Tibial artery (tissue), 4 donors: ENCODE measurements at regions of chr15 and their contacts with region 1.

Region 1: GRCh38 chr15:87902772-87903426 is 353.6 kb downstream of the NTRK3 start:
- DNase-seq: peak; percentile 65 to 90
- H3K4me3 ChIP-seq: peak overlapping the region in 1 of 2 donors; percentile 29
- H3K27ac ChIP-seq: peak overlapping the region; percentile 81 to 83
- H3K4me1 ChIP-seq: peaks cover 0 to 43% (median 3%) of the 10 kb centered on the region in 4 donors
- H3K27me3 ChIP-seq: no peaks in the 10 kb centered on the region
- CTCF ChIP-seq: peak; percentile 20 to 37

Region 2: GRCh38 chr15:87939848-87940457 is 37.1 kb after region 1 on chr15:
- intact Hi-C with region 1: loop called (anchors 5 kb)
- DNase-seq: peak in 1 of 2 donors; percentile 34
- H3K4me3 ChIP-seq: no peak overlapping the region
- H3K27ac ChIP-seq: peak overlapping the region in 1 of 2 donors; percentile 34
- H3K4me1 ChIP-seq: peaks cover 0 to 66% (median 25%) of the 10 kb centered on the region in 4 donors
- H3K27me3 ChIP-seq: no peaks in the 10 kb centered on the region
- CTCF ChIP-seq: no peak

Region 3: GRCh38 chr15:87959081-87959480 is 56.2 kb after region 1 on chr15:
- intact Hi-C with region 1: no loop called
- DNase-seq: no peak
- H3K4me3 ChIP-seq: no peak overlapping the region
- H3K27ac ChIP-seq: peak overlapping the region; percentile 67 to 74
- H3K4me1 ChIP-seq: peaks cover 0 to 58% (median 21%) of the 10 kb centered on the region in 4 donors
- H3K27me3 ChIP-seq: no peaks in the 10 kb centered on the region
- CTCF ChIP-seq: no peak

Region 4: DNA sequence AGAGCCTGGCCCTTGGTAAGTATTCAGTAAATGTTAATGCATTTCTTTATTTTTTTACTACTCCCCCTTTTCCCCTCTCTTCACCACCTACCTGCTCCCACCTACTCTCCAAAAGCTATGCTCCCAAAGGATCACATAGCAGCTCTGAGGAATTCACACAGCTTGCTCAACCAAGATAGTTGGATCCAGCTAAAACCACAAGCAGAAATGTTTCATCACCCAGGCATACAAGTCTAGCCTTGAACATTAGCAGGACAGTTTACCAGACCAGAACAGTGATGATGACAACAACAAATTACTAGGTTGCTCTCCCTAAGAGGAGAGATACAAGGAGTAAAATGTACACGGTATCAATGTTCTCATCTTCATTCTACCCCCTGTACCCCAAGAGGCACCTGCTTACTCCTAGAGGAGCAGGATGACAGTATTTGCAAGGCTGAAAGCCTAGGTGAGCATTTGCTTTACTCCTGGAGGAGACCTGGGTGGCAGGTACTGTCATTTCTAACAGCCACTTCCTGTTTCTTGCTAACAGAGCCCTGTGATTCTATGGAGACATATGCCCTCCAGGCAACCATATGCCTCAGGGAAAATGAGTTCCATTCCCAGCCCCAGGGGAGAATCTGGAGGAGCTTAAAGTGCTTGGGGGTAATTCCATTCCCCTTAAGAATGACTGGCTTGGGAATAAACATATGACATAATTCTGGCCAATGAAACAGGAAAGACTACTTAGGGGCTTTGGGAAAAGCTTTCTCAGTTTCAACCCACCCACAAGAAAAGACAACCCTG is 116.2 kb after region 1 on chr15:
- intact Hi-C with region 1: loop called (anchors 5 kb)
- DNase-seq: no peak
- H3K4me3 ChIP-seq: no peak overlapping the region
- H3K27ac ChIP-seq: no peak overlapping the region
- H3K4me1 ChIP-seq: peaks cover 0 to 49% (median 22%) of the 10 kb centered on the region in 4 donors
- H3K27me3 ChIP-seq: no peaks in the 10 kb centered on the region
- CTCF ChIP-seq: no peak